ENCODE measurements at regions of chr1 and their contacts with region 1.

Region 1: DNA sequence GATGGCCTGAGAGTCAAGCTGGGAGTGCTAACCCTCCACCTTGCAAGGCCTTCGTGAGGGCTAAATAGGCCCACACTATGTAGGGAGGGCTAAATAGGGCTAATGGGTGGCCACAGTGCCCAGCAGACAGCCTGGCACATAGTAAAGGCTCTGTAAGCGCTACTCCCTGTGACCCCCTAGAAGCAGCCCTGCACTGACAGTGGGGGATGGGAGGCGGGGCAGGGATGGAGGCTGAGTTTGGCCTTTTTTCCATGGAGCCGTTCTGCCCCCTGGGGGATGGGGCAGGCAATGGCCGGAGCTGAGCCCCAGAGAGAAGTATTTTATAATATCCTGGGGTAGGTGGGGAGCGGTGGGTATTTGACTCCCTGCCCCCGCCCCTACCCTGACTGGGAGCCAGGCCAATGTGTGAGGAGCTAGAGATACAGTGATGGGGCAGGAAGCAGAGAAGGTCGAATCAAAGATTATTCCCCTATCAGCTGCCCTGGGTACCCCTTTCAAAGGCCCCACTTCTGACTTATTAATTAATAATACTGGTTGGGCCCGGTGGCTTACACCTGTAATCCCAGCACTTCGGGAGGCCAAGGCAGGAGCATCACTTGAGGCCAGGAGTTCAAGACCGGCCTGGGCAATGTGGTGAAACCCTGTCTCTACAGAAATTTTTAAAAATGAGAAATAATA is 42.3 kb downstream of the LACTBL1 start:
- DNase-seq: no peak
- H3K4me3 ChIP-seq: no peak overlapping the region
- CTCF ChIP-seq: peak; percentile 81

Region 2: GRCh38 chr1:22665752-22666151 is 264.6 kb before region 1 on chr1:
- CTCF ChIA-PET with region 1: interaction called, 307 read pairs
- POLR2A ChIA-PET with region 1: no interaction called
- DNase-seq: no peak
- H3K4me3 ChIP-seq: no peak overlapping the region
- CTCF ChIP-seq: peak; percentile 74

Region 3: DNA sequence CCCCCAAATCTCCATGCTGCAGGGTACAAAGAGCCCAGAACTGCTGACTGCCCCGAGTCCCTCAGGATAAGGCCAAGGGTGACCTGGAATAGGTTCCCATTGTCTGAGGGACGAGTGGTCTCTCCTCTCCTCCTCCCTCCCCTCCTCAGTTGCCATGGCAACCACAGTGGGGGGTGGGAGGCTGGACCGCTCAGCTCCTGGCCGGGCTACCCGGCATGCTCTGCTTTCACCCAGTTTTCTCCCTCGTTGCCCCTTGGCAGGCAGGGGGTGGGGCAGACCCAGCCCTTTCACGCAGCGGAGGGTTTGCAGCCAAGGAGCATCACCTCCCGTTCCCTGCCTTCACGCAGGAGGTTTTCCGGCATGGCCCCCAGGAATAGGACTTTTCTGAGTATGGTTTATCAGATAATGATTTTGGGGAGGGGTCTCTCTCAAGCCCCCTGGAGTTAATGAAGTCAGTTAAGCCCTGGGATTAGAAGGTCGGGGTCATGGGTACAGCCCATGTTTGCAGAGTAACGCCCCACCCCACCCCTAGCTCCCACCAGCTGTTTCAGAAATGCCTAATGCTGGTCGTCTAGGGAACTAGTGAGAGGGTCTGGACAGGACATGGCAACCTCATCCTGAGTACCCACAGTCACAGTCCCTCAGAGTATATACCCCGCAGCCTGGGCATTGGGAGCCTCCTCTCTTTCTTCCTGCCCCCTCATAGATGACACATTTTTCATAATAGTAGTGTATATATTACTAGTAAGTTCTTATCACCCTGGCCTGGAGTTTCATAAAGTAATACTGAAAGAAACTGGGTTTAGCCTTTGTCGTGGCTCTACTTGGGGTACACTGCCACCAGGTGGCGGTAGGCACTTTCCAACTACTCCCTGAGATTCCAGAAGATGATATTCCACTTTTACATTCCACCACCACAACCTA is 256.6 kb before region 1 on chr1:
- CTCF ChIA-PET with region 1: interaction called, 307 read pairs
- POLR2A ChIA-PET with region 1: no interaction called
- DNase-seq: peak; percentile 7
- H3K4me3 ChIP-seq: no peak overlapping the region
- CTCF ChIP-seq: peak; percentile 75

Region 4: DNA sequence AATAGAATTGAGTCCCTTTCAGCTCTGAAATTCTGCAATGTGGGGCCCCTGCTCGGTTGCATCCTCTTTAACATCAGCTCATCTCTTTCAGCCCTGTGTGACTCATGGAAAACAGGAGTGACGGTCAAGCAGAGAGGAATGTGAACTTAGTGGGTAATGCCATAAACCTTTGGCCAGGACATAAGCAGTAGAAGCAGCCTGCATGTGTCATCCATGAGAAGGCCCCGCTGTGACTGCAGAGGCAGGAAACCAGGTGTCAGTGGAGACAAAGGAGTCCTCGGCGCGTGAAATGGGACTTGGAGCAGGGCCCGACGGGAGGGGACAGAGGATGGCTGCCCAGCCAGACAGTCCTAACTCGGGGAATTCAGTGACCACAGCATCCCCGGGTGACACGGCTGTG is 240.9 kb before region 1 on chr1:
- CTCF ChIA-PET with region 1: interaction called, 16 read pairs
- POLR2A ChIA-PET with region 1: no interaction called
- DNase-seq: peak; percentile 61
- H3K4me3 ChIP-seq: no peak overlapping the region
- CTCF ChIP-seq: no peak

Region 5: GRCh38 chr1:22916471-22916820 is 13.9 kb before region 1 on chr1:
- CTCF ChIA-PET with region 1: interaction called, 27 read pairs
- POLR2A ChIA-PET with region 1: no interaction called
- DNase-seq: no peak
- H3K4me3 ChIP-seq: no peak overlapping the region
- CTCF ChIP-seq: no peak

Region 6: DNA sequence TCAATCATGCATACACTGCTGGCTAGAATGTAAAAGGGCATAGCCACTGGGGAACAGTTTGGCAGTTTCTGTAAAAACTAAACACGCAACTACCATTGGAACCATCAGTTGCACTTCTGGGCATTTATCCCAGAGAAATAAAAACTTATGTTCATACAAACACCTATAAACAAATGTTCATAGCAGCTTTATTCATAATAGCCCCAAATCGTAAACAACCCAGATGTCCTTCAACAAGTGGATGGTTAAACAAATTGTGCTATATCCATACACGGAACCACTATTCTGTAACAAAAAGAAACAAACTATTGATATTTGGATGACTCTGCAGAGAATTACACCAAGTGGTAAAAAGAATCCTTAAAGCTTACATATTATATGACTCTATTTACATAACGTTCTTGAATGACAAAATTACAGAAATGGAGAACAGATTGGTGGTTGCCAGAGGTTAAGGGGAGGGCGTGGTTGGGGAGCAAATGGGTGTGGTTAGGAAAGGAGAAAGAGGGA is 19.5 kb after region 1 on chr1:
- CTCF ChIA-PET with region 1: interaction called, 13 read pairs
- POLR2A ChIA-PET with region 1: no interaction called
- DNase-seq: no peak
- H3K4me3 ChIP-seq: no peak overlapping the region
- CTCF ChIP-seq: no peak

Region 7: GRCh38 chr1:23098463-23099170 is 168.2 kb after region 1 on chr1:
- CTCF ChIA-PET with region 1: no interaction called
- POLR2A ChIA-PET with region 1: no interaction called
- DNase-seq: no peak
- H3K4me3 ChIP-seq: no peak overlapping the region
- CTCF ChIP-seq: peak; percentile 83